ENCODE measurements at regions of chr4 and their contacts with region 1.

Region 1: DNA sequence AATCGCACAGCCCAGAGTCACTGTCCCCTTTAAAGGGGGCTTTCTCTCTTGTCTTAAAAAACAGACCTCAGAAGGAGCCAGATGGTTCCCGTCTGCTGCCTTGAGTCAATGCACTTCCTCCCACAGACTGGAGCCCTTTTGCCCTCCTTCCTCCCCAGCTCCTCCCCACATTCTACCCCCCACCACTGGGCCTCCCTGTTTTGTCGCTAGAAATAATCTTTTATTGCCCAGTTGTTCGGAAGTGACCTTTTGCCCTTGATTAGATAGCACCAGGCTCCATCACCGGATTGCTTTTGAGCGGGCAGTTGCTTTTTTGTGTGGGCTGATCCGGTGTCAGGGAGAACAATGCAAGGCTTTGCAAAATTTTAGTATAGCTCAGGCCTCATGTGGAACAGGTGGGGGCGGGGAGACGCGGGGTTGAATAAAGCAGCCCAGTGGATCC is 47.7 kb downstream of the SPRY1 start:
- DNase-seq: peak; percentile 82 to 90
- H3K4me3 ChIP-seq: peak overlapping the region; percentile 10; the same call in 1 of the 2 replicates
- H3K4me3 Mint-ChIP-seq: peak overlapping the region; percentile 49
- H3K27ac Mint-ChIP-seq: peak overlapping the region; percentile 40
- H3K4me1 ChIP-seq: peaks cover 19% of the 10 kb centered on the region
- H3K4me1 Mint-ChIP-seq: peaks cover 3% of the 10 kb centered on the region
- H3K27me3 ChIP-seq: no peaks in the 10 kb centered on the region
- H3K27me3 Mint-ChIP-seq: no peaks in the 10 kb centered on the region
- CTCF ChIP-seq: no peak

Region 2: DNA sequence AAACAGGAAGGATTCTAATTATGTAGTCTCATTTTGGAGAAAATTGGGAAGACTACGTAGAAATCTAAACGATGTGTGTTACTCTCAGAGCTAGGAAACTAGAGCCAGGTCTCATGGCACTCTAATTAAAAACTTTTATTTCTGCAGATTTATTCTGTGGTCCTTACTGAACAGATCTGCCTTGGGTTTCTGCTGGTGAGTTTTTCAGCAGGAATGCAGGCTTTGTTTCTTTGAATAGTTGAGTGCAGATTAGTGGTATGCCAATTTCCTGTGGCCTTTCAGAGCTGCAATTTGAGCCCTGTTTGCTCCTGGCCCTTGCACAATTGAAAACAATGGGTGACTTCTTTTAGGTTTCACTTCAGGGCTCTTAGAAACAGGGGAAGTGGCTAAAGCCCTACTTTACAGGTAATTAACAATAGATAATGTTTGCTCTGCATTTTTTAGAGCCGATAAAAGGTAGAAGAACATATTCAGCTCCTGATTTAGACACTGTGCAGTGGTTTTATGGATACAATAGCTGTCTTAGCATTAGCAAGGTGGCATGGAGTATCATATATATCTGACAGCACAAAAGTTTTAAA is 25.9 kb before region 1 on chr4:
- CTCF ChIA-PET with region 1: interaction called, 3 read pairs
- POLR2A ChIA-PET with region 1: no interaction called
- intact Hi-C with region 1: loop called (anchors 1 kb)
- DNase-seq: peak; percentile 51 to 59
- H3K4me3 ChIP-seq: no peak overlapping the region
- H3K4me3 Mint-ChIP-seq: no peak overlapping the region
- H3K27ac Mint-ChIP-seq: peak overlapping the region; percentile 73
- H3K4me1 ChIP-seq: peaks cover 36% of the 10 kb centered on the region
- H3K4me1 Mint-ChIP-seq: peaks cover 25% of the 10 kb centered on the region
- H3K27me3 ChIP-seq: no peaks in the 10 kb centered on the region
- H3K27me3 Mint-ChIP-seq: no peaks in the 10 kb centered on the region
- CTCF ChIP-seq: no peak

Region 3: DNA sequence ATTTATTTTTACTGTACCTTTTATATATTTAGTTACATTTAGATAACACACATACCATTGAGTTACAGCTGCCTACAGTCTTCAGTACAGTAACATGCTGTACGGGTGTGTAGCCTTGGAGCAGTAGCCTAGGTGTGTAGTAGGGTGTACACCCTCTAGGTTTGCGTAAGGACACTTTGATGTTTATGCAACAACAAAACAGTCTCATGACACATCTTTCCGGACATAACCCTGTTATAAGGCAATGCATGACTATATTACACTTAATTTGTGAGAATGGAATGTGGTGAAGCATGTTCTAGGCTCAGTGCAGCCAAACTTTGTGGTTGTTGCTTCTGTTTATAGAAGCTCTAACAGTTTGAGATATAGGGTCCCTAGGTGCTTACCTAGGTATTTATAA is 17.7 kb after region 1 on chr4:
- CTCF ChIA-PET with region 1: no interaction called
- POLR2A ChIA-PET with region 1: no interaction called
- intact Hi-C with region 1: no loop called
- DNase-seq: no peak
- H3K4me3 ChIP-seq: no peak overlapping the region
- H3K4me3 Mint-ChIP-seq: no peak overlapping the region
- H3K27ac Mint-ChIP-seq: no peak overlapping the region
- H3K4me1 ChIP-seq: no peaks in the 10 kb centered on the region
- H3K4me1 Mint-ChIP-seq: peaks cover 19% of the 10 kb centered on the region
- H3K27me3 ChIP-seq: no peaks in the 10 kb centered on the region
- H3K27me3 Mint-ChIP-seq: no peaks in the 10 kb centered on the region
- CTCF ChIP-seq: no peak

Region 4: GRCh38 chr4:123505095-123506010 is 61.0 kb after region 1 on chr4:
- CTCF ChIA-PET with region 1: no interaction called
- POLR2A ChIA-PET with region 1: interaction called, 4 read pairs
- intact Hi-C with region 1: loop called (anchors 1 kb)
- DNase-seq: peak; percentile 76 to 80
- H3K4me3 ChIP-seq: peak overlapping the region; percentile 40
- H3K4me3 Mint-ChIP-seq: peak overlapping the region; percentile 79
- H3K27ac Mint-ChIP-seq: peak overlapping the region; percentile 91
- H3K4me1 ChIP-seq: peaks cover 30% of the 10 kb centered on the region
- H3K4me1 Mint-ChIP-seq: peaks cover 13% of the 10 kb centered on the region
- H3K27me3 ChIP-seq: no peaks in the 10 kb centered on the region
- H3K27me3 Mint-ChIP-seq: no peaks in the 10 kb centered on the region
- CTCF ChIP-seq: no peak

Region 5: GRCh38 chr4:123520325-123520724 is 76.0 kb after region 1 on chr4:
- CTCF ChIA-PET with region 1: no interaction called
- POLR2A ChIA-PET with region 1: no interaction called
- intact Hi-C with region 1: no loop called
- DNase-seq: no peak
- H3K4me3 ChIP-seq: no peak overlapping the region
- H3K4me3 Mint-ChIP-seq: no peak overlapping the region
- H3K27ac Mint-ChIP-seq: no peak overlapping the region
- H3K4me1 ChIP-seq: peaks cover 5% of the 10 kb centered on the region; the same call in 1 of the 2 replicates
- H3K4me1 Mint-ChIP-seq: no peaks in the 10 kb centered on the region
- H3K27me3 ChIP-seq: no peaks in the 10 kb centered on the region
- H3K27me3 Mint-ChIP-seq: no peaks in the 10 kb centered on the region
- CTCF ChIP-seq: no peak

Region 6: DNA sequence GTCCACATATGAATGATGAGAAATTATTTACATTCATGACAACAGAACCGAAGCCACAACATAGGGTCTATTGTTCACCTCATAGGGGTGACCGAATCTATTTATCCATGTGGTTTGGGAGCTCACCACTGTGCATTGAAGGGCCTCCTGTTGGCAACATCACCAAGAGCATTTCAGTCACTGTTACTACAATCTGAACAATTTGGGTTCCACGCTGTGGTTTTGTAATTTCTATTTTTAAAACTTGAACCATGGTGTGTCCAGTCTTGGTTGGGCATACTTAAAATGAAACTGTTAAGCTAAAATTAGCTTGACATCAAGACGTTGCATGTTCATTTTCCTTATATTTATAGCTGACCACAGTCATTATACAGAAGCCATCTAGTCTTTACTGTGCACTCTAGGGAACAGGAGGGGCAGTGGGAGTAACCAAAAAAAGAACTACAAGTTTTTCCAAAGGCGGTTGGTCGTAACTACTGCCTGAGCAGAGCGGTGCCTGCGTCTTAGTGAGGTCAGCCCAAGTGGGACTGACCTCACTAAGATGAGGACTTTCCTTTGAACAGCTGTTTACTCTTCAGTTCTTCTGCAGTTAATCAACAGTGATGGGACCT is 144.4 kb after region 1 on chr4:
- CTCF ChIA-PET with region 1: no interaction called
- POLR2A ChIA-PET with region 1: no interaction called
- intact Hi-C with region 1: no loop called
- DNase-seq: no peak
- H3K4me3 ChIP-seq: no peak overlapping the region
- H3K4me3 Mint-ChIP-seq: peak overlapping the region; percentile 32
- H3K27ac Mint-ChIP-seq: no peak overlapping the region
- H3K4me1 ChIP-seq: peaks cover 19% of the 10 kb centered on the region
- H3K4me1 Mint-ChIP-seq: peaks cover 6% of the 10 kb centered on the region
- H3K27me3 ChIP-seq: no peaks in the 10 kb centered on the region
- H3K27me3 Mint-ChIP-seq: no peaks in the 10 kb centered on the region
- CTCF ChIP-seq: no peak